Mammary epithelial cell (primary cell): ENCODE measurements at regions of chr5 and their contacts with region 1.

Region 1: GRCh38 chr5:180291943-180292831 is at the start of gene MAPK9:
- DNase-seq: peak; percentile 75
- H3K4me3 ChIP-seq: peak within 1 kb of the TSS; percentile 78 to 81 (median 81)
- H3K27ac ChIP-seq: peak within 1 kb of the TSS; percentile 33
- H3K4me1 ChIP-seq: peaks cover 5% of the 10 kb centered on the region
- H3K27me3 ChIP-seq: no peaks in the 10 kb centered on the region
- CTCF ChIP-seq: no peak
- total RNA-seq, gene MAPK9: 24.2 to 38.2 TPM

Region 2: DNA sequence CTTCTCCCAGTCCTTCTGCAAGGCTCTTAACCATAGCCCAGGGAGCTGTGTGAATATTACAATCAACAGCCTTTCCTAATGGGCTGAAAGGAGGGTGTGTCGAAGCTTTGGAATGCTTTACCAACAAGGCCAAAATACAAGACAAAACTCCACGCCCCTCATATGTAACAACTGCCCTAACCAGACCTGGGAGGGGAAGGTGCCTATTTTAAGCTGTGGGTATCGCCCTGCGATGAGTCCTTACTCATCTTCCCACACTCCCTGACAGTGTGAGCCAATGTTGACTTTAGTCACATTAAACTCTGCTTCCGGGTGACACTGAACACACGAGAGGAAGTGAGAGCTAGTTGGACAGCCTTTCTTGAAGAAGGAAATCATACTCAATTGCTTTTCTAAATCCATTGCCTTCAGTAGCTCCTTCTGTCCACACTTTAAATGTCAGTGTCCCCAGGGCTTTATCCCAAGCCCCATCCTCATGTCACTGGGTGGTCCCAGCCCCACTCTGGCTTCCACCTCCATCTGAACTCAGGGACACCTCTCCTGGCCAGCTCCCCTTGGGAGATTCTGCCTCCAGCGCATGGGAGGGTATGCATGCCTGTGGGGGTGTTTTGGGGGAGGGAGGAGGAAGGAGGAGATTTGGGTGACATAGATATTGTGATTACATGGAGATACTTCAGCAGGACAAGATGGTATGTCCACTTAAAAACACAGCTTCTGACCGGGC is 378.0 kb before region 1 on chr5:
- CTCF ChIA-PET with region 1: no interaction called
- dilution Hi-C with region 1: no loop called
- in situ Hi-C with region 1: no loop called
- intact Hi-C with region 1: no loop called
- DNase-seq: peak; percentile 88
- H3K4me3 ChIP-seq: no peak overlapping the region
- H3K27ac ChIP-seq: peak overlapping the region; percentile 33
- H3K4me1 ChIP-seq: peaks cover 18% of the 10 kb centered on the region
- H3K27me3 ChIP-seq: peaks cover 3% of the 10 kb centered on the region
- CTCF ChIP-seq: no peak

Region 3: DNA sequence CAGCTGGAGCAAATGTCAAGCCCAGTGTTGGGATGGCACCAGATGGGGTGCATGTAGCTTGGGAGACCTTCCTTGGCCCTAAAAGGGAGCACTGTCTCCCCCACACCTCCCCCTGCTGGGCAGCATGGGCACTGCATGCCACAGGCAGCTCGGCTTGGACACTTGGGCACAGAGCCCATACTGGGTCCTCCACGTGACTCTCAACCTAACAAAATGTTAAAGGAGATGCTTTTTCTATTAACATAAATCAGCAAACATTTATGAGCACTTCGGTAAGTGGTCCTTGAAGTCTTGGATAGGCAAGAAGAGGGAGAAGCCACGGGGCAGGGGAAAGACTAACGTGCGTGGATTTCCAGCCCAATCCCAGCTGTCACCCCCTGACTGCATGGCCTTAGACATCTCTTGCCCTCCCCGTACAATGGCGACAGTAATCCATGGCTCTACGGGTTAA is 23.6 kb after region 1 on chr5:
- CTCF ChIA-PET with region 1: interaction called, 3 read pairs
- dilution Hi-C with region 1: no loop called
- in situ Hi-C with region 1: no loop called
- intact Hi-C with region 1: loop called (anchors 1 kb)
- DNase-seq: peak; percentile 12
- H3K4me3 ChIP-seq: no peak overlapping the region
- H3K27ac ChIP-seq: no peak overlapping the region
- H3K4me1 ChIP-seq: no peaks in the 10 kb centered on the region
- H3K27me3 ChIP-seq: no peaks in the 10 kb centered on the region
- CTCF ChIP-seq: peak; percentile 62 to 86

Region 4: DNA sequence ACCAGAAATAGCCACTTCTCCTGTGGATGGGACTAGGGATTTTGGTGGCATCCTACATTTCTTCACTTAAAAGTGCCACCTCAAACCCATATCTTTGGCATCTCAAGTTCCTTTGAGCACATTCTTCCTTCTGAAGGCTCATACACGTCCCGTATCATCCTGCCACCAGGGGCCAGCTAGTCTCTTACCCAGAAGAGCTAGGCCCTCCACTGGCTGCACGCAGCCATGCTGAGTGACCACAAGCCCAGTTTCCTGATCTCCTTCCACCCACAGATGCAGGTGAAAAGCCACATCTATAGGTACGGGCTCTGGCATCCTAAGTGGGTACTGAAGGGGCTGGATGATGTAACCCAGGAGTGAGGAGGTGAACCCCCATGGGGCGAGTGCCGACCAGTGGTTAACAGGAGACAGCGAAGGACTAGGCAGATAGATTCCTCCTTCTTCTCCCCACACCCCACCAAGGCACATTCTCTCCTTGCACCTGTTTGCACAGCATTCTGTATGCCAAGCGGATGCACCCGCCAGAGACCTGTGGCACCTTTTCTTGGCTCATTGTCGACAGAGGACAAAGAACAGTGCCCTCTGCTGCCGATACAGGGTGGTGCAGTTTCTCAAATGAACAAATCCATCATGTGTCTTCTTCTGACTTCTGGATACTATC is 313.5 kb after region 1 on chr5:
- CTCF ChIA-PET with region 1: no interaction called
- dilution Hi-C with region 1: no loop called
- in situ Hi-C with region 1: no loop called
- intact Hi-C with region 1: loop called (anchors 1 kb)
- DNase-seq: peak; percentile 38
- H3K4me3 ChIP-seq: no peak overlapping the region
- H3K27ac ChIP-seq: no peak overlapping the region
- H3K4me1 ChIP-seq: no peaks in the 10 kb centered on the region
- H3K27me3 ChIP-seq: no peaks in the 10 kb centered on the region
- CTCF ChIP-seq: peak; percentile 81 to 82

Region 5: DNA sequence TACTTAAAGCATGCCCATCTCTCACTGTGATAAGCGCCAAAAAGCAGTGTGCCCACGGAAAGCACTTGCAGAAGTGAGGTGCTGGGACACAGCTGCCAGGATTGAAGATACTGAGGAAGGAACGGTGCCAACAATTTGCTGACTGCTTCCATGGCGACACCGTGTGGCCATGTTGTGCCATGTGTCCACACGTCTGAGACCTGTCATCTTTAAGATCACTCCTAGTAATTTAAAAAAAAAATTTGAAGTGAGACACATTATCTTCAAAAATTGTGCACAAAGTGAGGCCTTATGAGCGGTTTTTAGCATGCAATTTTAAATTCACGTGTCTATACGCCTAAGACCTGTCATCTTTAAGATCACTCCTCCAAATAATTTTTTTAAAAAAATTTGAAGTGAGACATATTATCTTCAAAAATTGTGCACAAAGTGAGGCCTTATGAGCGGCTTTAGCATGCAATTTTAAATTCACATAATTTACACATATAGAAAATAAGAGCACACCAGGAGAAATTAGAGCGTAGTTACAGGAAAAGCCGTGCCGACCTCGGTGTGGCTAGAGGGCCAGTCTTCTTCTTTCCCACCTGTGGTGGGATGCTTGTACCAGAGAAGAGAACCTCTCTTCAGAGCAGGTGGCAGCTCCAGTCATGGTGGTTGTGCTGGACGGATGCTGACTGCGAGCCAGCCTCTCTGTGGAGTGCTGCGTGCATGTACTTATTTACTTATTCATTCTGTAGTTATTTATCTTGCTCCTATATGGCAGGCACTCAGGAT is 378.6 kb after region 1 on chr5:
- CTCF ChIA-PET with region 1: no interaction called
- dilution Hi-C with region 1: no loop called
- in situ Hi-C with region 1: no loop called
- intact Hi-C with region 1: loop called (anchors 1 kb)
- DNase-seq: peak; percentile 13
- H3K4me3 ChIP-seq: no peak overlapping the region
- H3K27ac ChIP-seq: no peak overlapping the region
- H3K4me1 ChIP-seq: no peaks in the 10 kb centered on the region
- H3K27me3 ChIP-seq: peaks cover 9% of the 10 kb centered on the region
- CTCF ChIP-seq: peak; percentile 62 to 74